MCF 10A (cell line): ENCODE measurements at regions of chr12 and their contacts with region 1.

Region 1: DNA sequence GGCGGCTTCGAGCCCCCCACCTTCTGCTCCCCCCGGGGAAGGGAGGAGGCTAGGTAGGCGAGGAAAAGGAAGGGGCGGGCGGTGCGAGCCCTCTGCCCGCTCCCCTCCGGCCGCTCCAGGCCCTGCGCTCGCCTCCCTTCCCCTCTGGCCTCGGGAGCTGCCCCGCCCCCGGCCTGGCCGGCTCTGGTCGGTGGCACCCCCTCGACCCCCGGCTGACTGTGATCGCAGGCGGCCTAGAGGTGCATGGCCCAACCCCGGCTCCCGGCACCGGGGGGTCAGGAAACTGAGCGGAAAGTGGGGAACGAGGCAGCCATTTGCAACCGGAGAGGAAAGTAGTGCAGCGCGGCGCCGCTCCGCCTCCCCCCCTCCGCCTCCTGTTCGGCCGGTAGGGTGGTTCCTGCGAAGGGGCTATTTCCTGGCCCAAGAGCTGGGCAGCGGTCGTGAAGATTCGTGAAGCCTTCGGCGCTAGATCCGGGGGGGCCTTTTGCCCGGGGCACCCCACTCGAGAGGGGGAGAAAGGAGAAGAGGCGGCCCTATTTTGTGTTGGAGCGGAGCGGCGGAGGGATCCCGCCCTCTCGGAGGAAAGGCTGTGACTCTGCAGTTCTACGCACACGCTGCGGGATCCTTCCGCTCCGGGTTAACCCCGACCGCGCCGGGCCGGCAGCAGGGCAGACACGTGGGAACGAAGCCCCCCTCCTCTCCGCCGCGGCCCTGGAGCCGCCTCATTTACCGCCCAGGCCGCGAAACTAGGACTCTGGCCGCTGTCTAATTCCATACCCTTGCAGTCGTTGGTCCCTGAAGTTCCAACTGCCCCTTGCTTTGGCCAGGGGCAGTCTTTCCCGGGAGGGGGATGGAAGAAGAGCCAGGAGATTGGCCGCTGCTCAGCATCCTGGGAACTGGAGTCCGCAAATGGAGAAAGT is at the start of gene KMT2D:
- DNase-seq: peak; percentile 91
- H3K4me3 Mint-ChIP-seq: peak within 1 kb of the TSS; percentile 91
- H3K27ac Mint-ChIP-seq: peak within 1 kb of the TSS; percentile 89
- H3K4me1 Mint-ChIP-seq: peaks cover 32% of the 10 kb centered on the region
- H3K27me3 Mint-ChIP-seq: no peaks in the 10 kb centered on the region
- CTCF ChIP-seq: no peak
- total RNA-seq, gene KMT2D: 76.9 and 92.5 TPM in 2 replicates

Region 2: DNA sequence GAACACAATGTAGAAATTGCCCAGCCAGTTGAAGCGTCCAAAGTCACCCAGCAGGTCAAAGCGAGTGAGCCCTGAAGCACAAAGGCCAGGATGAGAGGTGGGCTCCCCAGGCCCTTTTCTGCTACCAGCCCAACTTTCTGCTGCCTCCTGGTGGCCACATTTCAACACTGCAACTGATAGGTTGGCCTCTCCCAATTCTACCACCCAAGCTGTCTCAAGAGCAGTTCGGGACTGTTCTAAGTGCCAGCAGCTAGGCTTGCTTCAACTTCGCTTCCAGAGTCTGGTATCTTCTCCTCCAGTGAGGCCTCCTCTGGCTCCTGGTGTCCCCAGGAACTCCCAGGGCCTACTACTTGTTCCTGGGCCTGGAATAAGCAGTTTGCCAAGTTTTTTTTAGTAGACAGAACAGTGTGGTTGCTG is 37.5 kb after region 1 on chr12:
- CTCF ChIA-PET with region 1: interaction called, 14 read pairs
- POLR2A ChIA-PET with region 1: interaction called, 4 read pairs
- intact Hi-C with region 1: loop called (anchors 2 kb)
- DNase-seq: peak; percentile 61
- H3K4me3 Mint-ChIP-seq: no peak overlapping the region
- H3K27ac Mint-ChIP-seq: no peak overlapping the region
- H3K4me1 Mint-ChIP-seq: peaks cover 5% of the 10 kb centered on the region
- H3K27me3 Mint-ChIP-seq: no peaks in the 10 kb centered on the region
- CTCF ChIP-seq: peak; percentile 51

Region 3: DNA sequence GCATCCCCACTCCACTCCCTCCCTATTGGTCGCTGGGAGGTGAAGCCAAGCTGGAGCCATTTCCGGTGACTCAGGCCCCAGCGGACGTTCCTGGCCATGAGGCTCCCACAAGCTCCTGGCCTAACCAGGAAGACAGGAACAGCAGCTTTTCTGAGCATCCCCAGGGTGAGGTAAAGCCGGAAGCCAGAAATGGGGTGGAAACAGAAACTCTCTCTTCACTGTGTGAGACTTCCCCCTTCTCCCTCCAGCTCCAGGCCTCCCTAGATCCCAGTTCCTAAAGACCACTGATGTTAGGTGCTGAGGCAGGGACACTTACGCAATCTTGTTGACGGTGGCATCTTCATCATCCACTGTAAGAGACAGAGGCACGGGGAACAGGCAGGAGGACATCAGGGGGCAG is 45.1 kb after region 1 on chr12:
- CTCF ChIA-PET with region 1: interaction called, 13 read pairs
- POLR2A ChIA-PET with region 1: interaction called, 27 read pairs
- intact Hi-C with region 1: no loop called
- DNase-seq: no peak
- H3K4me3 Mint-ChIP-seq: no peak overlapping the region
- H3K27ac Mint-ChIP-seq: no peak overlapping the region
- H3K4me1 Mint-ChIP-seq: peaks cover 23% of the 10 kb centered on the region
- H3K27me3 Mint-ChIP-seq: no peaks in the 10 kb centered on the region
- CTCF ChIP-seq: no peak

Region 4: DNA sequence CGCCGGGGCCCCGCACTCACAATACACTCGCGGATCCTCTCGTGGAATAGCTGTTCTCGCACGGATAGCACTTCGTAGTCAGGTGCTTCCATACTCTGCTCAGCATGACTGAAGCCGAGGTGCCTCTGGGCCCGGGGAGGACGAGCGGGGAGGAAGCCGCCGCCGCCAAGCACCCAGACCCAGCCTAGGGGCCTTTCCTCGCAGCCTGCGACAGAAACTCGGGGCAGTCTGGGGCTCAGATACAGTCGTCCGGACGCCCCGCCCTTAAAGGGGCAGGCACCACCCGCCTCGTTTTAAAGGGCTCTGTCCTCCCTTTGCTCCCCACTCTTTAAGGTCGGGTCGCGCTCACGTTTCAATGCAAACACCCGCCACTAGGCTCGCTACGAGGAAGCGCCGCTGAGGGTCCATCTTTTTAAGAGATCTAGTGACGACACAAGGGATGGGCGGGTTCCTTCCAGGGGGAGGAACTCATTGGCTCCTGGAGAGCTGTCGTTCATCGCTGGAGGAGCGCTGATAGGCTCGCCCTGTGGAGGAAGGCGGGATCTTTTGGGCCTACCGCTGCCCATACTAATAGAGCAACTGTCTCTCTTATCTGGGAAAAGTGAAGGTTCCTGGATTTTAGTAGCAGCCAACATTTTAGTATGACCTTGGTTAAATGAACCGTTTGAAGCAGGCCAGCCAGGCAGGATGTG is 50.1 kb after region 1 on chr12 and contains the start of gene LMBR1L:
- CTCF ChIA-PET with region 1: interaction called, 13 read pairs
- POLR2A ChIA-PET with region 1: interaction called, 27 read pairs
- intact Hi-C with region 1: no loop called
- DNase-seq: peak; percentile 99
- H3K4me3 Mint-ChIP-seq: peak within 1 kb of the TSS; percentile 86
- H3K27ac Mint-ChIP-seq: peak within 1 kb of the TSS; percentile 97
- H3K4me1 Mint-ChIP-seq: peaks cover 18% of the 10 kb centered on the region
- H3K27me3 Mint-ChIP-seq: no peaks in the 10 kb centered on the region
- CTCF ChIP-seq: peak; percentile 14
- total RNA-seq, gene LMBR1L: 27.8 and 35.7 TPM in 2 replicates

Region 5: GRCh38 chr12:49121047-49121696 is 60.7 kb after region 1 on chr12:
- CTCF ChIA-PET with region 1: interaction called, 48 read pairs
- POLR2A ChIA-PET with region 1: interaction called, 10 read pairs
- intact Hi-C with region 1: loop called (anchors 1 kb)
- DNase-seq: peak; percentile 78
- H3K4me3 Mint-ChIP-seq: no peak overlapping the region
- H3K27ac Mint-ChIP-seq: no peak overlapping the region
- H3K4me1 Mint-ChIP-seq: no peaks in the 10 kb centered on the region
- H3K27me3 Mint-ChIP-seq: no peaks in the 10 kb centered on the region
- CTCF ChIP-seq: peak; percentile 57